K562 (cell line): ENCODE measurements at regions of chr6 and their contacts with region 1.

Region 1: DNA sequence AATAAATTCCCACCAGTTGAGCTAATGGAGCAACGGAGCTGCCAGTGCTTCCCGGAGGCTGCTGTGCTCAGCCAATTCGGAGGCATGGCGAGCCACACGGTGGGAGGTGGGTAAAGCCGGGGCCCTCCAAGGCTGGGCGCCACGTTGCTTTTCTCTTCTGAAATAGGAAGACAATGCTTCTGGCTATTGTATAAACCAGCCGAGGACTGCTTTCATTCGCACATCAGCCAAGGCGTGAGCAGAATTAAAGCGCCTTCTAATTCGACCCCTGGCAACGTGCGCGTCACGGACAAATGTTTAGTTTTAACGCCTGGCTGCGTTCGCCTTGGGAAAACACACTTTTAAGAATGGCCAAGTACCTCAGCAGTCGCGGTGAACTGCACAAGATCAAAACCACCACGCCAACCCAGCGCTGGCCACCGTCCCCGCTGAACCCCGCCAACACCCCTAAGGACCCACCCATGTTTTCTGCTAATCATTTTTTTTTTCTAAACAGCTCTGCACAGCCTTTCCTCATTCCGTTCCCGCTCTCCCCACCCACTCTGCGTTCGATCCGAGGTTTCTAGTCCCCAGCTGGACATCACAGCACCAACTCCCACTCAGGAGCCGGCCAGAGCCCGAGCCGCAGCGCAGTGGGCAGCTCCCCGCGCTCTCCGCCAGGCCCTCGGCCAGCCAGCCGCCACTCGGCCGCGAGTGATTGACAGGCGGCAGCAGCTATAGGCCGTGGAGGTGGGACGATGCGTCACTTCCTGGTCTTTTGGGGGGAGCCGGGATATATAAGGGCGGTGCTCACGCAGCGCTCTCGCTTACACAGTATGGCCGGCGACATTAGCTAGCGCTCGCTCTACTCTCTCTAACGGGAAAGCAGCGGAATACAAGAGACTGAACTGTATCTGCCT is at the start of gene AMD1:
- DNase-seq: peak; percentile 90 to 98 (median 94)
- ATAC-seq: peak; percentile 82
- H3K4me3 ChIP-seq: peak within 1 kb of the TSS; percentile 84
- H3K27ac ChIP-seq: peak within 1 kb of the TSS; percentile 90
- H3K4me1 ChIP-seq: peaks cover 15 to 18% of the 10 kb centered on the region in 2 experiments; a peak in 4 of 5 replicates
- H3K27me3 ChIP-seq: no peaks in the 10 kb centered on the region
- CTCF ChIP-seq: 0 out of 6 replicates have a peak, but pooled peaks of 1 of the 3 experiments have one; percentile 5
- EP300 ChIP-seq: no peak
- POLR2A ChIP-seq: peak; percentile 100
- RAD21 ChIP-seq: peak in 1 of 2 experiments; percentile 32; a peak in 1 of 4 replicates
- polyA plus RNA-seq, gene AMD1: 82.1 to 85.6 TPM

Region 2: DNA sequence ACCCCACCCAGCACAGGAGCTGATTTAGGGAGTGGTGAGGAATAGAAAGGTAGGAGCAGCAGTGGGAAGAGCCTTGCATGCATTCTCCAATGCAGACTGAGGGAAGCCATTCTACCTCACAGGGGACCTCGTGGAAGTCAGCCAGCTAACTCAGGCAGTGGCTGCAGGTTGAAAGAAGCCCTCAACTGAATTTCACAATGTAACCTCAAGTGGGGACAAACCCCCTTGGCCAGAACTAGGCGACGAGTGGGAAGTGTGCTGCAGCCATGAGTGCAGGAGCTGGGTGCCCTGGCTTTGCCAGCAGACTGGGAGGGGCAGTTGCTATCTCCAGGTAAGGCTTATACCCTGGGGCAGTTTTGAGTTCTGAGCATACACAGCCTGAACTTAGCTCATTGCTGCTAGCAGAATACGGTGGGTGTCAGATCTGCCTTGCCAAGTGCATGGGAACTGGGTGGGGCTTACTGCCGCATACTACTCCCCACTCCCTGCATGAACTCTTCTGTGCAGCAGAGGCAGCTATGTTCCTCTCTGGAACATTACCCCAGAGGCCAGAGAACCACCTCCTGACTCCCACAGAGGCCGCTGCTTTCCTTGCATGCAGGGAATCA is 185.5 kb before region 1 on chr6:
- CTCF ChIA-PET with region 1: interaction called, 3 read pairs
- POLR2A ChIA-PET with region 1: interaction called, 40 read pairs
- in situ Hi-C with region 1: no loop called
- intact Hi-C with region 1: loop called (anchors 2 kb)
- DNase-seq: no peak
- ATAC-seq: peak; percentile 63
- H3K4me3 ChIP-seq: no peak overlapping the region
- H3K27ac ChIP-seq: no peak overlapping the region
- H3K4me1 ChIP-seq: no peaks in the 10 kb centered on the region
- H3K27me3 ChIP-seq: peaks cover 0 to 7% of the 10 kb centered on the region in 2 experiments; a peak in 1 of 5 replicates
- CTCF ChIP-seq: no peak; a peak in 1 of 6 replicates
- EP300 ChIP-seq: no peak
- POLR2A ChIP-seq: no peak
- RAD21 ChIP-seq: peak in 1 of 2 experiments; percentile 19; a peak in 1 of 4 replicates

Region 3: GRCh38 chr6:110853754-110854477 is 20.3 kb before region 1 on chr6:
- CTCF ChIA-PET with region 1: no interaction called
- POLR2A ChIA-PET with region 1: interaction called, 12 read pairs
- in situ Hi-C with region 1: no loop called
- intact Hi-C with region 1: no loop called
- DNase-seq: no peak
- ATAC-seq: no peak; the same call in 2 of the 3 replicates
- H3K4me3 ChIP-seq: no peak overlapping the region
- H3K27ac ChIP-seq: no peak overlapping the region
- H3K4me1 ChIP-seq: peaks cover 0 to 6% of the 10 kb centered on the region in 2 experiments; a peak in 2 of 5 replicates
- H3K27me3 ChIP-seq: peaks cover 0 to 3% of the 10 kb centered on the region in 2 experiments; a peak in 1 of 5 replicates
- CTCF ChIP-seq: no peak
- EP300 ChIP-seq: no peak
- POLR2A ChIP-seq: no peak
- RAD21 ChIP-seq: no peak

Region 4: DNA sequence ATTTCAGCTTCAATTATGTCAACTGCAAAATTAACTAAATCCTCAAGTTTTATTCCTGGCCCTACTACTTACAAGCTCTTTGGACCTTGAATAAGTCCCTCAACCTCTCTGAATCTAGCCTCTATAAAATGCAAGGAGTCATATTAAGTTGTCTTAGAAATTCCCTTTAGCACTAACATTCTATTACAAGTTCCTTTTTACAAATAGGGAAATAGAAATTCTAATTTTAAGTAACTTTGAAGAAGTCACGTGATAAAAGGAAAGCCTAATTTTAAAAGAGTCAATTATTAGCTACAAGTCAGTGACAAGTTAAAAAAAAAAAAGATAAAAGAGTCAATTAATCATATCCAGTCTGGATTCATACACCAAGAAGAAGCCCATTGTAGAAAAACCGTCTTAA is 59.7 kb after region 1 on chr6:
- CTCF ChIA-PET with region 1: no interaction called
- POLR2A ChIA-PET with region 1: interaction called, 13 read pairs
- in situ Hi-C with region 1: no loop called
- intact Hi-C with region 1: no loop called
- DNase-seq: no peak
- ATAC-seq: no peak
- H3K4me3 ChIP-seq: no peak overlapping the region
- H3K27ac ChIP-seq: no peak overlapping the region
- H3K4me1 ChIP-seq: peaks cover 0 to 5% of the 10 kb centered on the region in 2 experiments; a peak in 2 of 5 replicates
- H3K27me3 ChIP-seq: no peaks in the 10 kb centered on the region
- CTCF ChIP-seq: no peak
- EP300 ChIP-seq: no peak
- POLR2A ChIP-seq: no peak
- RAD21 ChIP-seq: no peak

Region 5: GRCh38 chr6:110981202-110981600 is 107.0 kb after region 1 on chr6:
- CTCF ChIA-PET with region 1: no interaction called
- POLR2A ChIA-PET with region 1: interaction called, 15 read pairs
- in situ Hi-C with region 1: no loop called
- intact Hi-C with region 1: no loop called
- DNase-seq: no peak
- ATAC-seq: peak; percentile 5; the same call in 2 of the 3 replicates
- H3K4me3 ChIP-seq: peak overlapping the region; percentile 59
- H3K27ac ChIP-seq: peak overlapping the region; percentile 80; the same call in 2 of the 3 replicates
- H3K4me1 ChIP-seq: peaks cover 8 to 12% of the 10 kb centered on the region in 2 experiments; a peak in 4 of 5 replicates
- H3K27me3 ChIP-seq: no peaks in the 10 kb centered on the region
- CTCF ChIP-seq: no peak
- EP300 ChIP-seq: no peak
- POLR2A ChIP-seq: no peak
- RAD21 ChIP-seq: no peak